ENCODE measurements at regions of chr9 and their contacts with region 1.

Region 1: GRCh38 chr9:77433675-77434445 is 214.3 kb downstream of the GNA14 start:
- DNase-seq: peak in 1 of 2 experiments; percentile 51
- H3K4me3 ChIP-seq: no peak overlapping the region
- H3K27ac ChIP-seq: no peak overlapping the region
- H3K4me1 ChIP-seq: no peaks in the 10 kb centered on the region
- H3K27me3 ChIP-seq: no peaks in the 10 kb centered on the region
- CTCF ChIP-seq: peak; percentile 92

Region 2: DNA sequence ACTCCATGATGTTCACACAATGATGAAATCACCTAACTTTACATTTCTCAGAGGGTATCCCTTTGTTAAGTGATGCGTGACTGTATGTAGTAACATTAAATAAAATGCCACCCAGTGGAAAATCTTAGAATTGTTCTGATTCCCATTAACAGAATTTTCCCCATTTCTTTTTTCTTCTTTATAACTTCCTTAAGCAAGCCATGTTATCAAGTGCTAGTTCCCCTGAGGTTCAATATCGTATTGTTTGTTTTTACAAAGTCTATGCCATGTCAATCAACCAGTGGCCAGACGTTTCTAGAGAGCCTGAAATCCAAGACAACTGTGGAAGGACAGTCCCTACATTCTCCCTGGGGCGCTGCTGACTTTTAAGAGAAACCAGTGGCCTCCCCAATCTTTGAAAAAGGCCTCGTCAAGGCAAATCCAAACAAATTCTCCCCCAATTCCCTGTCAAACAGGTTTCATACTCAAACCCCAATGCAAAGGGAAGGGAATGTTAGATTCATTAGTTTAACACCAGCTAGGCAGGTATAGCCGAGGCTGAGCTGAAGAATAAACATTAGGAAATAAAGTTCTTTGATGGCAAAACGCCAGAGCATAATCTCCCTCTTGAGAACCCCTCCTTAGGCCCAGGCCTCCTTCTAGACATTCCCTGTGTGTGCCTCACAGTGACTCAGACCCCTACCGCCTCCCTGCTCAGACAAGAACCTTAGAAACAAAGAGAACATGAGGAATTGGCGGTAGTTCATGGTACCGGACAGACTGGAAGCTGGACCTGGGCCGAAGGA is 15.6 kb after region 1 on chr9:
- CTCF ChIA-PET with region 1: no interaction called
- POLR2A ChIA-PET with region 1: no interaction called
- intact Hi-C with region 1: loop called (anchors 2 kb)
- DNase-seq: peak; percentile 62 to 74
- H3K4me3 ChIP-seq: no peak overlapping the region
- H3K27ac ChIP-seq: 0 out of 2 replicates have a peak overlapping the region, but pooled peaks have one; percentile 25
- H3K4me1 ChIP-seq: peaks cover 7% of the 10 kb centered on the region
- H3K27me3 ChIP-seq: no peaks in the 10 kb centered on the region
- CTCF ChIP-seq: no peak; the same call in 1 of the 2 replicates